ENCODE measurements at regions of chr14 and their contacts with region 1.

Region 1: GRCh38 chr14:77616454-77617229 is at the start of gene SPTLC2:
- DNase-seq: peak; percentile 97 to 98 (median 98)
- ATAC-seq: peak; percentile 98
- H3K4me3 ChIP-seq: peak within 1 kb of the TSS; percentile 96
- H3K27ac ChIP-seq: peak within 1 kb of the TSS; percentile 78
- H3K4me1 ChIP-seq: peaks cover 7 to 9% of the 10 kb centered on the region in 2 experiments; a peak in 3 of 5 replicates
- H3K27me3 ChIP-seq: no peaks in the 10 kb centered on the region
- CTCF ChIP-seq: peak in 1 of 3 experiments; percentile 25; a peak in 2 of 6 replicates
- EP300 ChIP-seq: no peak
- POLR2A ChIP-seq: peak; percentile 70
- RAD21 ChIP-seq: no peak
- polyA plus RNA-seq, gene SPTLC2: 4.5 to 5.4 TPM

Region 2: GRCh38 chr14:77000340-77001270 is 616.0 kb before region 1 on chr14:
- CTCF ChIA-PET with region 1: no interaction called
- POLR2A ChIA-PET with region 1: no interaction called
- in situ Hi-C with region 1: no loop called
- intact Hi-C with region 1: no loop called
- DNase-seq: no peak
- ATAC-seq: peak; percentile 74
- H3K4me3 ChIP-seq: no peak overlapping the region
- H3K27ac ChIP-seq: no peak overlapping the region
- H3K4me1 ChIP-seq: peaks cover 0 to 7% of the 10 kb centered on the region in 2 experiments; a peak in 2 of 5 replicates
- H3K27me3 ChIP-seq: no peaks in the 10 kb centered on the region; a peak in 1 of 5 replicates
- CTCF ChIP-seq: no peak
- EP300 ChIP-seq: no peak
- POLR2A ChIP-seq: no peak
- RAD21 ChIP-seq: no peak

Region 3: GRCh38 chr14:77923131-77923936 is 306.7 kb after region 1 on chr14:
- CTCF ChIA-PET with region 1: no interaction called
- POLR2A ChIA-PET with region 1: interaction called, 3 read pairs
- in situ Hi-C with region 1: no loop called
- intact Hi-C with region 1: loop called (anchors 1 kb)
- DNase-seq: peak; percentile 40 to 88 (median 62)
- ATAC-seq: peak; percentile 91
- H3K4me3 ChIP-seq: no peak overlapping the region
- H3K27ac ChIP-seq: peak overlapping the region; percentile 92
- H3K4me1 ChIP-seq: peaks cover 46 to 47% of the 10 kb centered on the region in 2 experiments
- H3K27me3 ChIP-seq: no peaks in the 10 kb centered on the region
- CTCF ChIP-seq: no peak; a peak in 1 of 6 replicates
- EP300 ChIP-seq: peak; percentile 79
- POLR2A ChIP-seq: no peak
- RAD21 ChIP-seq: no peak